PC-3 (cell line): ENCODE measurements at regions of chr17 and their contacts with region 1.

Region 1: DNA sequence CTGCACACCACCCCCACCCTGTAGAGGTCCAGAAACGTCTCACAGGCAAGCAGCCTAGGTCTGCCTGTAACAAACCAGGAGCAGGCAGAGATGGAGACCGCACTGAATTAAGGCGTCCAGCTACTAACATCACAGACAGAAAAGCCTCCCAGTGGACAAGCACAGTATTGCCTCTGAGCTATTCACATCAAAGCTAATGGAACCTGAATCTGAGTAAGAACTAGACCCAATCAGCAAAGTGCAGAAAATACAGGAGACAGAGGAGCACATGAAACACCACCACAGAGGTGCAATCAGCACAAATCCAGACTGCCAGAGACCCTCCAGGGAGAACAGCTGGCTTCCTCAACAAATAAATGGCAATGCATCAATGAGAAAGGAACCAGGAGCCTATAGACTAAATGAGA is 22.2 kb upstream of the PEMT start:
- DNase-seq: peak; percentile 84
- ATAC-seq: peak; percentile 99
- H3K4me3 ChIP-seq: no peak overlapping the region
- H3K27ac ChIP-seq: no peak overlapping the region
- H3K4me1 ChIP-seq: no peaks in the 10 kb centered on the region
- H3K27me3 ChIP-seq: no peaks in the 10 kb centered on the region
- CTCF ChIP-seq: peak; percentile 82

Region 2: DNA sequence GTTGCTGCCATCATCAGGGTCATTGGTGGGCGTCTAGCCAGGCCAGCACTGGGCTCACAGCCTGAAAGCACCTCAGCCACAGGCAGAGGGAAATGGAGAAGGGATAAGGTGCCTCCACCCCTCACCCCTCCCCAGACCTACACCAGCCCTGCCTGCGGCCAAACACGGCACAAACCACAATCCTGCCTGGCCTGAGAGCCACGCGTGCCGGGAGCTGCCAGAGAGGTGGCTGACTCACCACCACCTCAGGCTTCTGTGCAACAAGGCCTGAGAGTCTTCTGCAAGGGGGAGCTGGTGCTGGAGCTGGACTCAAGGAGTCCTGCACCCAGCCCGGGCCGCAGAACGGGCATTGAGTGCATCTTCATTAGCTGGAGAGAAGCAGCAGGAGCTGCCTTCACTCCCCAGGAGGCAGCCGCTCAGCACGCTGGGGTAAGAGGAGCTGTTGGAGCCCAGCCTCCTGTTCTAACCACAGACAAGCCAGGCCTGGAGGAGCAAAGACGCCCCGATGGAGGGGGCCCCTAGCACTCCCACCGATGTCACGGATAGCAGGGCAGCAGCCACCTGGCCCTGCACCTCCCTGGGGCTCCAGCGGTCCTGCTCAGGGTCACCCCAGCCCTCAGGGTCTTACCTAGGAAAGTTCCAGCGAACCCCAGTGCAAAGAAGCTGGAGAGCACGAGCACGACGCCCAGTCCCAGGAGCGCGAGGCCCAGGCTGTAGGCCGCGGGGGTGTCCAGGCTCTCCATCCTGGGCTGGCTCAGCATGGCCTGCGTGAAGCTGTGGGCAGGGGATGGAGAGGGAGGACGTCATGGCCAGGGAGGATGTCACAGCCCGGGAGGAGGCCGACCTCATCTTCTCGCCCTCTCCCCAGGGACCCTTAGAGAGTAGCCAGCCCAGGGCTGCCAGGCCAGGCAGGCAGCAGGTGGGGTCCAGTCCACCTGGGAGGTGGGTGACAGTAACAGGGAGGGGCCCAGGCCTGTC is 101.5 kb before region 1 on chr17:
- CTCF ChIA-PET with region 1: interaction called, 10 read pairs
- POLR2A ChIA-PET with region 1: no interaction called
- intact Hi-C with region 1: no loop called
- DNase-seq: peak; percentile 97
- ATAC-seq: peak; percentile 94
- H3K4me3 ChIP-seq: no peak overlapping the region
- H3K27ac ChIP-seq: no peak overlapping the region
- H3K4me1 ChIP-seq: peaks cover 29% of the 10 kb centered on the region
- H3K27me3 ChIP-seq: no peaks in the 10 kb centered on the region
- CTCF ChIP-seq: no peak

Region 3: GRCh38 chr17:17555151-17555550 is 58.6 kb before region 1 on chr17:
- CTCF ChIA-PET with region 1: interaction called, 10 read pairs
- POLR2A ChIA-PET with region 1: no interaction called
- intact Hi-C with region 1: no loop called
- DNase-seq: no peak
- ATAC-seq: no peak
- H3K4me3 ChIP-seq: no peak overlapping the region
- H3K27ac ChIP-seq: no peak overlapping the region
- H3K4me1 ChIP-seq: no peaks in the 10 kb centered on the region
- H3K27me3 ChIP-seq: no peaks in the 10 kb centered on the region
- CTCF ChIP-seq: no peak